PC-9 (cell line): ENCODE measurements at regions of chr14 and their contacts with region 1.

Region 1: GRCh38 chr14:80584744-80585505 is 356.6 kb downstream of the CEP128 start:
- DNase-seq: peak in 1 of 2 experiments; percentile 95
- H3K4me3 ChIP-seq: no peak overlapping the region
- H3K27ac ChIP-seq: peak overlapping the region; percentile 76
- H3K4me1 ChIP-seq: peaks cover 29% of the 10 kb centered on the region
- H3K27me3 ChIP-seq: no peaks in the 10 kb centered on the region
- CTCF ChIP-seq: no peak

Region 2: GRCh38 chr14:80017795-80018194 is 567.1 kb before region 1 on chr14:
- CTCF ChIA-PET with region 1: no interaction called
- POLR2A ChIA-PET with region 1: no interaction called
- intact Hi-C with region 1: no loop called
- DNase-seq: no peak
- H3K4me3 ChIP-seq: no peak overlapping the region
- H3K27ac ChIP-seq: no peak overlapping the region
- H3K4me1 ChIP-seq: no peaks in the 10 kb centered on the region
- H3K27me3 ChIP-seq: no peaks in the 10 kb centered on the region
- CTCF ChIP-seq: no peak

Region 3: GRCh38 chr14:80390808-80391300 is 194.1 kb before region 1 on chr14:
- CTCF ChIA-PET with region 1: no interaction called
- POLR2A ChIA-PET with region 1: interaction called, 6 read pairs
- intact Hi-C with region 1: loop called (anchors 1 kb)
- DNase-seq: peak; percentile 59 to 87
- H3K4me3 ChIP-seq: no peak overlapping the region
- H3K27ac ChIP-seq: peak overlapping the region; percentile 49
- H3K4me1 ChIP-seq: peaks cover 40% of the 10 kb centered on the region
- H3K27me3 ChIP-seq: no peaks in the 10 kb centered on the region
- CTCF ChIP-seq: no peak

Region 4: DNA sequence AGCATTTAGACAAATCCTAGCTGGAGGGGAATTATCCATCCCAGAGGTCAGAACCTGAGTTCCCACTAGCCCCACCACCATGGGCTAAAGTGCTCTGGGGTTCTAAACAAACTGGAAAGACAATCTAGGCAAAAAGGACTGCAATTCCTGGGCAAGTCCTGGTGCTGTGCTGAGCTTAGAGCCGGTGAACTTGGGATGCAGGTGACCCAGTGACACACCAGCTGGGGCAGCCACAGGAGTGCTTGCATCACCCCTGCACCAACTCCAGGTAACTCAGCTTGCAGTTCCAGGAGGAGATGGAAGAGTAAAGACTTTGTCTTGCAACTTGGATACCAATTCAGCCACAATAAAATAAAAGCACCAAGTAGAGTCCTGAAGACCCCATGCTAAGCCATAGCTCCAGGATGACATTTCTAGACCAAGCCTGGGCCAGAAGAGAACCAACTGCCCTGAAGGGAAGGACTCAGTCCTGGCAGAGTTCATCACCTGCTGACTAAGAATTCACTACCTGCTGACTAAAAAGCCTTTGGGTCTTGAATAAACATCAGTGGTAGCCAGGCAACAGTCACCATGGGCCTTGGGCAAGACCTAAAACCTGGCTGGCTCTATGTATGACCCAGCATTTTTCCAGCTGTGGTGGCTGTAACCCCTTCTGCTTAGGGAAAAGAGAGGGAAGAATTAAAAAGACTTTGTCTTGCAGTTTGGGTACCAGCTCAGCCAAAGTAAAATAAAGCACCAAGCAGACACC is 150.2 kb before region 1 on chr14:
- CTCF ChIA-PET with region 1: no interaction called
- POLR2A ChIA-PET with region 1: no interaction called
- intact Hi-C with region 1: loop called (anchors 1 kb)
- DNase-seq: peak; percentile 74 to 94
- H3K4me3 ChIP-seq: no peak overlapping the region
- H3K27ac ChIP-seq: peak overlapping the region; percentile 86
- H3K4me1 ChIP-seq: peaks cover 39% of the 10 kb centered on the region
- H3K27me3 ChIP-seq: no peaks in the 10 kb centered on the region
- CTCF ChIP-seq: no peak

Region 5: GRCh38 chr14:80636071-80636470 is 51.1 kb after region 1 on chr14:
- CTCF ChIA-PET with region 1: no interaction called
- POLR2A ChIA-PET with region 1: no interaction called
- intact Hi-C with region 1: loop called (anchors 1 kb)
- DNase-seq: no peak
- H3K4me3 ChIP-seq: no peak overlapping the region
- H3K27ac ChIP-seq: peak overlapping the region; percentile 99
- H3K4me1 ChIP-seq: peaks cover 45% of the 10 kb centered on the region
- H3K27me3 ChIP-seq: no peaks in the 10 kb centered on the region
- CTCF ChIP-seq: 0 out of 2 replicates have a peak, but pooled peaks have one; percentile 21